Endothelial cell of umbilical vein (primary cell): ENCODE measurements at regions of chr17 and their contacts with region 1.

Region 1: DNA sequence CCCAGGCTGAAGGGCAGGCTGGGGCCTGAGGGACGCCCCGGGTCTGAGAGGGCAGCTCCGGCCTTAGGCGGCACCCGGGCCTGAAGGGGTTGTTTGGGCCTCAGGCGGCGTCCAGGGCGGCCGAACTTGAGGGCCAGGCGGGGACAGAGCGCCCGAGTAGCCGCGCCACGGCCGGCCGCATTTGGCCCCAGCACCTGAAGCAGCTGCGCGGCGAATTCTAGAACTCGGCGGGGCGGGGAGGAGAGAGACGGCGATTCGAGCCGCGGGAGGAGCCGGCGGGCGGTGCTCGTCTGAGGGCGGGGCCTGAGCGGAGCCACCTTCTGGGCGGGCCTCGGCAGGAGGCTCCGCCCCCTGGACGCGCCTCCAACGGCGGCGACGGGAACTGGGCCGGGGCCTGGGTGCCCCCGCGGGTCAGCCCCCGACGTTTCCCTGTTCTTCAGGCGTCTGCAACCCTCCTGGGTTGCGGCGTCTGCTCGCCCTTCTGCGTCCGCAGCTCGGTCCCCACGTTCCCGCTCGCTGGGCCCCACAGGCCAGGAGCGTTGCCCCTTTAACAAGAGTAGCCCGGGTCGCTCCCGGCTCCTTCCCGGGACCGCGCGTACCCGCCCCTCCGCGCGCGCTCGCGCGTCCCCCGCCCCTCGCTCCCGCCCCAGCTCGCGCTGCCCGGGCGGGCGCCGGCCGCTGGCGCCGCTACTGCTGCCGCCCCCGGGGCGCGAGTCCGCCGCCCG is at the starts of genes INCA1 and KIF1C:
- DNase-seq: peak; percentile 89
- H3K4me3 ChIP-seq: peak within 1 kb of the TSS; percentile 77 to 95 (median 82)
- H3K27ac ChIP-seq: peak within 1 kb of the TSS; percentile 73
- H3K4me1 ChIP-seq: peaks cover 19% of the 10 kb centered on the region
- H3K27me3 ChIP-seq: no peaks in the 10 kb centered on the region
- CTCF ChIP-seq: peak in 1 of 2 donors; percentile 13
- POLR2A ChIP-seq: peak; percentile 73
- total RNA-seq, gene INCA1: 0.71 and 1.0 TPM in 2 replicates
- total RNA-seq, gene KIF1C: 171 and 174 TPM in 2 replicates

Region 2: GRCh38 chr17:4939796-4940624 is 57.5 kb before region 1 on chr17 and contains the starts of genes RNF167 and SLC25A11:
- CTCF ChIA-PET with region 1: interaction called, 8 read pairs
- POLR2A ChIA-PET with region 1: no interaction called
- dilution Hi-C with region 1: no loop called
- intact Hi-C with region 1: loop called (anchors 2 kb)
- DNase-seq: peak; percentile 100
- H3K4me3 ChIP-seq: peak within 1 kb of the TSS; percentile 45 to 84 (median 77)
- H3K27ac ChIP-seq: peak within 1 kb of the TSS; percentile 81
- H3K4me1 ChIP-seq: peaks cover 21% of the 10 kb centered on the region
- H3K27me3 ChIP-seq: no peaks in the 10 kb centered on the region
- CTCF ChIP-seq: no peak
- POLR2A ChIP-seq: peak; percentile 85
- total RNA-seq, gene RNF167: 60.2 and 61.0 TPM in 2 replicates
- total RNA-seq, gene SLC25A11: 50.2 and 58.2 TPM in 2 replicates